GM12878 (cell line): ENCODE measurements at regions of chr2 and their contacts with region 1.

Region 1: DNA sequence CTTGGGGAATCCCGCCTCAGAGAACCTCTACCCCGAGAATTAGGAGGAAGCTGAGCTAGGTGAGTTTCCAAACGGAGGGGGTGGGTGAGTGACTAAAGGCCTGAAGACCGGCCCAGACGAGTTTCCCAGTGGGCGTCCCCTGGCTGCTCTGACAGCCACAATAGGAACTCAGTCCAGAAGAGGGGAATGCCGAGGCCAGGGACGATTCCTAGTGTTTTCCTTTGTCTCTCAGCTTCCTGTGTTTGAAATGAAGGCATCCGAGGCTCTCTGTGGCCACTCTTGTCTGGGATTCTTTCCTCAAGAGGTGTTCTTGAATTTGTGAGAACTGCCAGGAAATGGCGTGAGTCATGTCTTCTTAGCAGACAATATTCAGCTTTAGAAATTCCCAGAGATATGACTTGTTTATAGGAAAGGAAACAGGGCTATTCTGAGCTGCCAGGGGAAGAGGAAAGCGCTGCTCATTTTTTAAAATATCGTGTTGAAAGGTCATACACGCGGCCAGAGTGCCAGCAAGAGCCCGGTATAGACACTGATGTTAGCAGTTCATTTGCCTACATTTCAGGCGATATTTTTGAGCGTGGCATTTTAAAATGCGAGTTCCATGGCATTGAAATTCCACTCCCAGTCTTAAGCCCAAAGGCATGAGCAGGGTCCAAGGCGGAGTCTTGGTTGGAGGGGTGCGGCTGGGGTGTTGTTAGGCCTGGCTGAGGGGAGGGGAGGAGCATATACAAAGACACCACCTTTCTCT is 169.1 kb upstream of the KLF7 start:
- DNase-seq: no peak
- ATAC-seq: peak; percentile 43
- H3K4me3 ChIP-seq: peak overlapping the region; percentile 46
- H3K27ac ChIP-seq: peak overlapping the region; percentile 98
- H3K4me1 ChIP-seq: peaks cover 59% of the 10 kb centered on the region
- H3K27me3 ChIP-seq: no peaks in the 10 kb centered on the region
- CTCF ChIP-seq: no peak
- EP300 ChIP-seq: no peak
- POLR2A ChIP-seq: no peak
- RAD21 ChIP-seq: no peak

Region 2: GRCh38 chr2:207226243-207226642 is 108.6 kb before region 1 on chr2:
- CTCF ChIA-PET with region 1: no interaction called
- POLR2A ChIA-PET with region 1: interaction called, 4 read pairs
- RAD21 ChIA-PET with region 1: interaction called, 4 read pairs
- SMC1A ChIA-PET with region 1: interaction called, 4 read pairs
- in situ Hi-C with region 1: no loop called
- intact Hi-C with region 1: loop called (anchors 1 kb)
- DNase-seq: no peak
- ATAC-seq: no peak
- H3K4me3 ChIP-seq: no peak overlapping the region
- H3K27ac ChIP-seq: no peak overlapping the region
- H3K4me1 ChIP-seq: peaks cover 17% of the 10 kb centered on the region
- H3K27me3 ChIP-seq: no peaks in the 10 kb centered on the region
- CTCF ChIP-seq: no peak
- EP300 ChIP-seq: no peak
- POLR2A ChIP-seq: no peak
- RAD21 ChIP-seq: no peak

Region 3: GRCh38 chr2:207288628-207289027 is 46.2 kb before region 1 on chr2:
- CTCF ChIA-PET with region 1: interaction called, 6 read pairs
- POLR2A ChIA-PET with region 1: interaction called, 11 read pairs
- RAD21 ChIA-PET with region 1: interaction called, 56 read pairs
- SMC1A ChIA-PET with region 1: interaction called, 93 read pairs
- in situ Hi-C with region 1: no loop called
- intact Hi-C with region 1: loop called (anchors 2 kb)
- DNase-seq: peak; percentile 59
- ATAC-seq: peak; percentile 89
- H3K4me3 ChIP-seq: no peak overlapping the region
- H3K27ac ChIP-seq: no peak overlapping the region
- H3K4me1 ChIP-seq: peaks cover 46% of the 10 kb centered on the region
- H3K27me3 ChIP-seq: no peaks in the 10 kb centered on the region
- CTCF ChIP-seq: no peak
- EP300 ChIP-seq: peak; percentile 41 to 44; a peak in 2 of 4 replicates
- POLR2A ChIP-seq: no peak
- RAD21 ChIP-seq: no peak

Region 4: DNA sequence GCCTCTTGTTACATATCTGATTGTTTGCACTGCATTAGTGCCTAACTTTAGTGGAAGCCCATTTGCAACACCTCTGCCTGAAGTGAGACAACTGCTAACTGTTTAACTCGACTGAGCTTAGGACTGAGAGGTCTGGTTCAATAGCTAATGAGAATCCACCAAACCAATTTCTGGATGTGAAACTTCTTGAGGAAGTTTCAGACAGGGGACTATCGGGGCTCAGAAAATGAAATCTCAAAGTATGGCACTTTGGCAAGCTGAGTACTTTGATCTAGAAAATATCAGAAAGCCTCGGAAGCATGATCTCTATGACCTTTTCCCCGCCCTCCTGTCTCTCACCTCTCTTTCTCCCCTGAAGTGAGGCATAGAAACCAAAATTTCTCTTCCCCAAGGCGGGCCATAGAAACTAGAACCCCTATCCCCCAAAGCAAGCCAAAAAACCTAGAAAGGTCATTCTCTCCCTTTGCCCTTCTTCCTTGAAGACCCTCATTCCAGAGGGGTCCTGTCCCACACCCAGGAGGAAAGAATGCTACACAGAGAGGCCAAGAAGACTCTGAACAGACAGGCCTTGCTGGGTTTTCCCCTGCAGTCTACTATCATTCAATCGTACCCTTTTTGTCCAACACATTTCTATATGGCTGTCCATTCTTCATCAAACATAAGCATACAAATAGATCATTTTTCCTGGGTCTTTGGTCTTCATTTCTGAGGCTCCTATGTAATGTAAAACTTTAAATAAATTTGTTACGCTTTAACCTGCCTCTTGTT is 125.4 kb after region 1 on chr2:
- CTCF ChIA-PET with region 1: interaction called, 3 read pairs
- POLR2A ChIA-PET with region 1: no interaction called
- RAD21 ChIA-PET with region 1: interaction called, 5 read pairs
- SMC1A ChIA-PET with region 1: interaction called, 3 read pairs
- in situ Hi-C with region 1: no loop called
- intact Hi-C with region 1: loop called (anchors 1 kb)
- DNase-seq: peak; percentile 36
- ATAC-seq: peak; percentile 97
- H3K4me3 ChIP-seq: peak overlapping the region; percentile 21; the same call in 1 of the 2 replicates
- H3K27ac ChIP-seq: peak overlapping the region; percentile 15; the same call in 1 of the 2 replicates
- H3K4me1 ChIP-seq: peaks cover 11% of the 10 kb centered on the region
- H3K27me3 ChIP-seq: no peaks in the 10 kb centered on the region
- CTCF ChIP-seq: no peak
- EP300 ChIP-seq: 0 out of 4 replicates have a peak, but pooled peaks of 1 of the 2 experiments have one; percentile 29
- POLR2A ChIP-seq: no peak
- RAD21 ChIP-seq: no peak